ENCODE measurements at regions of chr12 and their contacts with region 1.

Region 1: DNA sequence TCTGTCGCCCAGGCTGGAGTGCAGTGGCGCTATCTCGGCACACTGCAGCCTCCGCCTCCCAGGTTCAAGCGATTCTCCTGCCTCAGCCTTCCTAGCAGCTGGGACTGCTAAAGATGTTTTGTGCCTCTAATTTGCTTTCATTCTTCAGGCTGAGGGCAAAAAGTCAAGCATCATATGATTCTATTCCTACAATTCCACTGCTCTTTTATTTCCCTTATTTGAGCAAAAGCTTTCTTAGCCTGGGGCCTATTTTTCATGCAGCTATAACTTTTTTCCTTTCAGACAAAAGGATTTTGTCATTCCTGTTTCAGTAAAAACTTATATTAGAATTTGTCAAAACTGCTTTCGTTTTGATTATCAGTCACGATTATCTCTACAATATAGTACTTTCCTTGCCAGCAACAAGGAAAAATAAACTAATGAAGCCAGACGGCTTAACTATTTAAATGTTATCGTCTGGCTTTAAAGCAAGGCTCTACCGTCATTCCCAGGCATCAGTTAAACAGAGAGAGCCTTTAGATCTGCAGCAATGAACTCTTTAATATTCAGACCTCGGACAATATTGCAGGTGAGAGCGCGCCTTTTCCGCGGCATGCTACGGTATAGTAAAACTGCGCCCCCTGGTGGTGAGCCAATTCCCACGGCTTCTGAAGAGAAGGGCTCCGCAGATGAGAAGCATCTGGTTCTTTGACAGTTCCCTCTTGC is 1.4 kb upstream of the SLC2A13 start:
- DNase-seq: peak; percentile 80 to 94
- H3K4me3 ChIP-seq: no peak overlapping the region; the same call in 1 of the 2 replicates
- H3K4me1 ChIP-seq: peaks cover 19% of the 10 kb centered on the region
- H3K27me3 ChIP-seq: no peaks in the 10 kb centered on the region; the same call in 1 of the 2 replicates

Region 2: DNA sequence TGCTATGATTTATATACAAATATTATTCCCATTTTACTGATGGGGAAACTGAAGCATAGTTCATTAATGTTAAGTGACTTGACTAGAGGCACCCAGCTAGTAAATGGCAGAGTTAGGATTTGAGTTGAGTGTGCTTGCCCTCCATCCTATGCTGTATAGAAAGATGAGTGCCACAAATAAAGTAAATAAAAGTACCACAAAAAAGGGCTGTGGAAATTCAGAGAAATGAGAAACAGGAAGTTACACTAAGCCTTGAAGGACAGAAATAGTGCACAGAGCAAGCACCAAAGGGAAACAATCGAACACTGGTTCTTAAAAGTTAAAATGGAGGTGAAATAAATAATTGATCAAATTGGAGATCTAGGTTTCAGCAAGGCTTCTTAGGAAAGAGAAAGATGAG is 478.4 kb before region 1 on chr12:
- in situ Hi-C with region 1: no loop called
- DNase-seq: no peak
- H3K4me3 ChIP-seq: no peak overlapping the region
- H3K4me1 ChIP-seq: no peaks in the 10 kb centered on the region
- H3K27me3 ChIP-seq: no peaks in the 10 kb centered on the region

Region 3: DNA sequence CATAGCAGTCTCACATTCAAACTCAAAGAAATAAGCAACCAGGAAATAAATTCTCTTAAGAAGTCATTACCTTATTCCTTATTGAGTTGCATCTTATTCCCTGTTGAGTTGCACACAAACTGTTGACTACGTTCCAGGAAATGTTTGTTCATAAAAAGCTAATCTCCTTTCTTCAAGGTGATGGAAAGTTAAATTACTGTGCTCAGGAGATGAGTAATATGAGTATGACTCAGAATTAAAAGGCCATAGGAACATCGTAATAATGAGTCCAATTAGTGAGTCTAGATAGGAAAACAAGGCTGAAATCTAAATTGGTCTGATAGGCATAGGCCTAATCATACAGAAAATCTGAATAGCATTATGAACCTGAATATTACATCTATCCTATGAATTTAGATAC is 204.4 kb before region 1 on chr12:
- in situ Hi-C with region 1: no loop called
- DNase-seq: no peak
- H3K4me3 ChIP-seq: no peak overlapping the region
- H3K4me1 ChIP-seq: peaks cover 4% of the 10 kb centered on the region
- H3K27me3 ChIP-seq: no peaks in the 10 kb centered on the region

Region 4: GRCh38 chr12:40010899-40011774 is 96.1 kb before region 1 on chr12:
- in situ Hi-C with region 1: loop called (anchors 10 kb)
- DNase-seq: peak; percentile 74 to 75
- H3K4me3 ChIP-seq: no peak overlapping the region
- H3K4me1 ChIP-seq: no peaks in the 10 kb centered on the region
- H3K27me3 ChIP-seq: no peaks in the 10 kb centered on the region

Region 5: GRCh38 chr12:40158592-40159111 is 51.4 kb after region 1 on chr12:
- in situ Hi-C with region 1: no loop called
- DNase-seq: no peak
- H3K4me3 ChIP-seq: no peak overlapping the region
- H3K4me1 ChIP-seq: peaks cover 5% of the 10 kb centered on the region
- H3K27me3 ChIP-seq: no peaks in the 10 kb centered on the region

Region 6: GRCh38 chr12:40382217-40382616 is 275.0 kb after region 1 on chr12:
- in situ Hi-C with region 1: no loop called
- DNase-seq: no peak
- H3K4me3 ChIP-seq: no peak overlapping the region
- H3K4me1 ChIP-seq: peaks cover 8% of the 10 kb centered on the region
- H3K27me3 ChIP-seq: peaks cover 15% of the 10 kb centered on the region

Measured in HAP-1 (cell line).